Left colon (tissue), 2 donors: ENCODE measurements at regions of chr3 and their contacts with region 1.

Region 1: GRCh38 chr3:192566706-192567290 is 160.5 kb downstream of the FGF12 start:
- DNase-seq: peak in 1 of 2 donors; percentile 67
- ATAC-seq: peak; percentile 68

Region 2: DNA sequence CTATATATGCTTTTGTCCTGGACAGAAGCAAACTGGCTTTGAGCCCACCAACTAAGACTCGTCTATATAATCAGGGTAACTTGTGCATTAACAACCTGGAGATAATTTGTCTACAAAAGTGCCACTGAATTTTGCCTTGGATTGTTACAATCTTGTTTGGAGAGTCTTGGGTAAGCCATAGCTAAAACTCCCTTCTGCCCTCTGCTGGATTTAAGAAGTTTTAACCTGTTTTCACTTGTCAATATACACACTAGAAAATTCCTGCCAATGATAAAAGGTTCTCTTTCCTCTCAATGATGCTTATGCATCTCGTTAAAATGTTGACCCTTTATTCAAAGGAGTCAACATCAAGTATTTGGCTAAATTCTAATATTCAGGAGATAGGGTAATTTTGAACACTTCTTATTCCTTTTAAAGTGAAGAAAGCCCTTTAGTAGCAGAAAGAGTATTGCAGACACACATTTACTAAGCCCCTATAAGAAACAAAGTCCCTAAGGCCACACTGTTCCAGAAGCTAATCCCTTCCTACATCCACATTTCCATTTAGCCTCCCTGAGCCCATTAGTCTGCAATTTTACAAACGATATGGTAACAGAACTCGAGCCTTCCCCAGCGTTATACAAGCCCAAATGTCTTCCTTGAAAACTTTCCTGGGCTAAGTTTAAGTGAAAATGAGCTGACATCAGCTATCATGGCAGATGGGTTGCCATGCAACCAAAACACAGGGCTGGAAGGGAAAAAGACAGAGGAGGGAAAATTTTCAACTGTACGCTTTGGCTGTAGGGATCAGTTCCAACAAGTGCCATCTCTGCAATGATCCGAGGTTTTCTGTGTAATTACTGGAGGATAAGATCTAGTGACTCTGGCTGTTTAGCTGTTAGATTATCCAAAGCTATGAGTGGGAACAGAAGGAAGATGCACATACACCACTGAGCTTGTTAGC is 236.4 kb after region 1 on chr3:
- intact Hi-C with region 1: loop called in 1 of 2 experiments (anchors 5 kb)
- DNase-seq: no peak
- ATAC-seq: peak; percentile 47

Region 3: GRCh38 chr3:193446965-193447602 is 880.3 kb after region 1 on chr3:
- intact Hi-C with region 1: no loop called
- DNase-seq: no peak
- ATAC-seq: no peak